Endothelial cell of umbilical vein (primary cell): ENCODE measurements at regions of chr7 and their contacts with region 1.

Region 1: GRCh38 chr7:131859147-131859821 is 302.9 kb upstream of the PODXL start:
- DNase-seq: peak; percentile 82
- H3K4me3 ChIP-seq: no peak overlapping the region
- H3K27ac ChIP-seq: no peak overlapping the region
- H3K4me1 ChIP-seq: peaks cover 17% of the 10 kb centered on the region
- H3K27me3 ChIP-seq: peaks cover 5 to 12% of the 10 kb centered on the region in 2 experiments
- CTCF ChIP-seq: peak; percentile 82 to 92
- POLR2A ChIP-seq: no peak

Region 2: DNA sequence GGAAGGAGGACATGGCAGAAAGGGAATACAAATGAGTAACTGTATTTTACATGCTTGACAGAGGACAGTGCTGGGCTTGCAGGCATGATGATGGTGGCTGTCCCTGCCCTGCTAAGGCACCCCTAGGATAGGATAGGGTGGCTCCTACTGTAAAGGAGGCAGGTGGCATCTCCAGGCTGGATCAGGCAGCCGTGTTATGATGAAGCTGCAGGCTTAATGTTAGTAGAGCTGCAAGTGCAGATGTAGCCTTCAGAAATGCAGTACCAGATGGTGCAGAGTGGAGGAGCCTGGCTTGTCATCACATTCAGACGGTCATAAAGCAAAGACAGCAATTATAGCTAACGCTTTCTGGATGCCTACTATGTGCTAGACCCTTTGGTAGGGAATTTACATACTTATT is 14.9 kb before region 1 on chr7:
- CTCF ChIA-PET with region 1: interaction called, 22 read pairs
- POLR2A ChIA-PET with region 1: no interaction called
- dilution Hi-C with region 1: no loop called
- intact Hi-C with region 1: no loop called
- DNase-seq: no peak
- H3K4me3 ChIP-seq: no peak overlapping the region
- H3K27ac ChIP-seq: no peak overlapping the region
- H3K4me1 ChIP-seq: no peaks in the 10 kb centered on the region
- H3K27me3 ChIP-seq: peaks cover 0 to 2% of the 10 kb centered on the region in 2 experiments
- CTCF ChIP-seq: no peak
- POLR2A ChIP-seq: no peak

Region 3: DNA sequence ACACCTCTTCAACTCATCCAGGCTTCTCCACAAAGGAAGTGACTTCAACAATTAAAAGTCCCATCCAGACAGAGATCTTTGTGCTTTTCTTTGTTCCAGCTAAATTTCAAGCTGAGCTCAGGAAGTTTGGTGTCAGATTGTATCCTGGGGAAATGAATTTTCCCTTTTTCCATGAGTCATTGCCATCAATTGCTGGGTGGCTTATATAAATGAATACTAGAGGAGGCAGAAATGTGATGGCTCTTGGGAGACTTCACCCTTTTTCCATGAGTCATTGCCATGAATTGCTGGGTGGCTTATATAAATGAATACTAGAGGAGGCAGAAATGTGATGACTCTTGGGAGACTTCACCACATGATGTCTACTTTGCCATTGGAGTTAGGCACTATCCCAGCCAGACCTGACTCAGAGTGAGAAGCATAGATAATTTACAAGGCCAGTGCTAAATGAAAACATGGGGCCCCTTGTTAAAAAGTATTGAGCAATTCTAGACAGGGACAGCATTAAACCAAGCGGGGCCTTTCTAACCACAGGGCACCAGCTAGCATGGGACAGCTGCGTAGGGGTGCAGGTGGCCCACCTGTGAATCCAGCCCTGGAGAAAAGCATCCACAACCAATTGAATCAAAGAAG is 36.4 kb after region 1 on chr7:
- CTCF ChIA-PET with region 1: interaction called, 17 read pairs
- POLR2A ChIA-PET with region 1: no interaction called
- dilution Hi-C with region 1: no loop called
- intact Hi-C with region 1: loop called (anchors 1 kb)
- DNase-seq: peak; percentile 93
- H3K4me3 ChIP-seq: no peak overlapping the region
- H3K27ac ChIP-seq: peak overlapping the region; percentile 95
- H3K4me1 ChIP-seq: peaks cover 23% of the 10 kb centered on the region
- H3K27me3 ChIP-seq: no peaks in the 10 kb centered on the region
- CTCF ChIP-seq: no peak
- POLR2A ChIP-seq: no peak

Region 4: DNA sequence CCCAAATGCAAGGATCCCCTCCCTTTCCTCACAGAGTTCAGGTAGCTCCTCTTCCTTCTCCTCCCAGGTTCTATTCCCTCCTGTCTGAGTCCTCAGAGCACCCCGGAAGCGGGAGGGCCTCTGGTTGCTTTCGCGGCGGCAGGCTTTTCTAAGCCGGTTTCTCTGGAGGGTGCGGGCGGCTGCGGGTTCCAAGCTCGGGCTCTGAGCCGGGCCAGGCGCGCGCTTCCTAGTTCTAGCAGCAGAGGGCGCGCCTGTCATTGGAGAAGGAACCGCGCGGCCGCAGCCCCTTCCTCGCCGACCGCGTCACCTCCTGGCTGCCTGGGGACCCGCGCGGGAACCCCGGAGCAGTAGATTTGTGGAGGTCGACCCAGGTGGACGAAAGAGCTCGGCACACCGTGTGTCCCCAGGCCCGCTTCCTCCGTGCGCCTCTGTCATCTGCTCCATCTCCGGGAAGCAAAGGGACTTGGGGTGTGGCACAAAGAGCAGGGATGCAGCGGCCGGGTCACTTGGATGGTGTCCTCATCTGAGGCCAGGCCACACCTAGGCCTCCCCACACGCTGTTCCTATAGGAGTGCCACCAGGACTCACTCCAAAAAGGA is 86.1 kb after region 1 on chr7:
- CTCF ChIA-PET with region 1: interaction called, 54 read pairs
- POLR2A ChIA-PET with region 1: no interaction called
- dilution Hi-C with region 1: no loop called
- intact Hi-C with region 1: loop called (anchors 1 kb)
- DNase-seq: peak; percentile 46
- H3K4me3 ChIP-seq: no peak overlapping the region
- H3K27ac ChIP-seq: no peak overlapping the region
- H3K4me1 ChIP-seq: peaks cover 9% of the 10 kb centered on the region
- H3K27me3 ChIP-seq: peaks cover 8 to 19% of the 10 kb centered on the region in 2 experiments
- CTCF ChIP-seq: peak; percentile 89 to 93
- POLR2A ChIP-seq: no peak

Region 5: DNA sequence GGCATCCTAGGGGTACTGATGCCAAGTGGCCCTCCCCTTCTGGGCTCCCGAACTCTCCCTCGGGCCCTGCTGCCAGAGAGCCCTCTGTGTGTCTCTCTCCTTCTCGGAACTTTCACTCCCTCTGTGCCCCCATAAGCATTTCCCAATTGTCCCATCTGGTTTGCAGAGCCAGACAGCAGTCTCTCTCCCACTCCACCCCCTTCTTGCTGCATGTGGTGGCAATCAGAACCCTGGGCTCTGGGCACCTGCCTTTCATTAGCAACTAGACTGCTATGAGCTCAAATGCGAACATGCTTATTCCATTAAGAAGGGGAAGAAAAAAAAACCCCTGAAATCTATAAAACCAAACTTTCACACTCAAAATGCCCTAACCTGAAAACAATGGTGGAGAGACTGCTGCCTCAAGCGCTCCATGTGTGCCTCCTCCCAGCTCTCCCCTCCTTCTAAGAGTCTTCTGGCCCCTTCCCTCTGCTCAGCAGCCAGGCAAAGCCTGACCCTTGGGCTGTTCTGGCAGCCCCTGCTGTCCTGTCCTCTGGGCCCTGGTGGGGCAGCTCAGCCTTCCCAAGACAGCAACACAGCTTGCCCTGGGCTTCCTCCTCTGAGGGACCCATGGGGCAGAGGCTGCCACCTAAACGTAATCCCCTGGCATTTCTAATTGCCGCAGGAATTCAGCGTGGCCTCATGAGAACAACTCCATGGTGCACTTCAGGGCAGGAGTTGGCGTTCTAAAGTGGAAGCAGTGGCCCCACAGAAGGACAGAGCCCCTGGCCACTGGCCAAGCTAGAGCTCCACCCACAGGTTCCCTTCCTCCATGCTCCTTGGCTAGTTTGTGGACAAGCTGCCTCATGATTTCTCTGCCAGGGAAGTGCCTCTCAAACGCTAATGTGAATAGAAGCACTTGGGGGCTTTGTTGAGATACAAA is 301.6 kb after region 1 on chr7:
- CTCF ChIA-PET with region 1: interaction called, 10 read pairs
- POLR2A ChIA-PET with region 1: no interaction called
- dilution Hi-C with region 1: no loop called
- intact Hi-C with region 1: no loop called
- DNase-seq: peak; percentile 21
- H3K4me3 ChIP-seq: no peak overlapping the region
- H3K27ac ChIP-seq: no peak overlapping the region
- H3K4me1 ChIP-seq: no peaks in the 10 kb centered on the region
- H3K27me3 ChIP-seq: no peaks in the 10 kb centered on the region
- CTCF ChIP-seq: no peak
- POLR2A ChIP-seq: no peak

Region 6: DNA sequence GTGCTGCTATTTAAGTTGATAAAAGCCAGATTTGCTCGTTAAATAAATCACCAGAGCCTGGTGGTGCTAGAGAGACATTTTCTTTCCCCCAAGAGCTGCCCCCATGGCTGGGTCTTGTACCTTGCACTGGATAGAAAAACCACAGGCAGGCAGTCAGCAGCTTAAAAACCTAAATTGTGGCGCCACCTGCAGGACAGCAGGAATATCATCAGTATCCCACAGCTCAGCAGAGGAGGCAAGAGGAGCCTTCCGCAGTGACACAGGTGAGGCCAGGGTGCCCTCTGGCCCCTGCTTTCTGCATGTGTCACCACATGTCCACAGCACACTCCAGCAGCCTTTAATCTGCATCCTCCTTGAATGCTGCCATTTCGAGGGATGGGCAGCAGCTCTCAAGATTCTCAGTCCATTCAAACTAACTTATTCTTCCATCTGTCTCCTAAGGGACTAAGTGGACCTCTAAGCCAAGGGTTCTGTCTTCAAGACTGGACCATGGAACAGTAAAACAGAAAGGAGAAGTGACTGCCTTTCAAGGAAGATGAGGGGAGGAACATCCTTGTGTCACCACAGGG is 721.5 kb after region 1 on chr7:
- CTCF ChIA-PET with region 1: interaction called, 90 read pairs
- POLR2A ChIA-PET with region 1: no interaction called
- dilution Hi-C with region 1: no loop called
- intact Hi-C with region 1: loop called (anchors 1 kb)
- DNase-seq: peak; percentile 78
- H3K4me3 ChIP-seq: no peak overlapping the region
- H3K27ac ChIP-seq: no peak overlapping the region
- H3K4me1 ChIP-seq: peaks cover 7% of the 10 kb centered on the region
- H3K27me3 ChIP-seq: no peaks in the 10 kb centered on the region
- CTCF ChIP-seq: peak; percentile 59 to 76
- POLR2A ChIP-seq: no peak